ENCODE measurements at regions of chr5 and their contacts with region 1.

Region 1: GRCh38 chr5:160835376-160835775 is 16.6 kb downstream of the ATP10B start:
- DNase-seq: no peak
- ATAC-seq: peak; percentile 33
- H3K4me3 ChIP-seq: no peak overlapping the region
- H3K27ac ChIP-seq: no peak overlapping the region
- H3K4me1 ChIP-seq: no peaks in the 10 kb centered on the region
- H3K27me3 ChIP-seq: no peaks in the 10 kb centered on the region
- CTCF ChIP-seq: no peak
- EP300 ChIP-seq: no peak
- POLR2A ChIP-seq: no peak
- RAD21 ChIP-seq: no peak

Region 2: GRCh38 chr5:160802592-160802991 is 32.8 kb before region 1 on chr5:
- CTCF ChIA-PET with region 1: interaction called, 12 read pairs
- POLR2A ChIA-PET with region 1: interaction called, 12 read pairs
- RAD21 ChIA-PET with region 1: interaction called, 5 read pairs
- SMC1A ChIA-PET with region 1: interaction called, 53 read pairs
- in situ Hi-C with region 1: no loop called
- intact Hi-C with region 1: no loop called
- DNase-seq: no peak
- ATAC-seq: peak; percentile 73
- H3K4me3 ChIP-seq: no peak overlapping the region
- H3K27ac ChIP-seq: no peak overlapping the region
- H3K4me1 ChIP-seq: no peaks in the 10 kb centered on the region; the same call in 1 of the 2 replicates
- H3K27me3 ChIP-seq: no peaks in the 10 kb centered on the region
- CTCF ChIP-seq: peak; percentile 24 to 70 (median 34); a peak in 3 of 6 replicates
- EP300 ChIP-seq: no peak
- POLR2A ChIP-seq: no peak
- RAD21 ChIP-seq: peak; percentile 56

Measured in GM12878 (cell line).